Activated CD4-positive, alpha-beta T cell treated with anti-CD3 and anti-CD28 coated beads, Interleukin-2, amount 10 ng/mL, durations not matched to agents 24 days and 14 days (primary cell): ENCODE measurements at regions of chr13 and their contacts with region 1.

Region 1: DNA sequence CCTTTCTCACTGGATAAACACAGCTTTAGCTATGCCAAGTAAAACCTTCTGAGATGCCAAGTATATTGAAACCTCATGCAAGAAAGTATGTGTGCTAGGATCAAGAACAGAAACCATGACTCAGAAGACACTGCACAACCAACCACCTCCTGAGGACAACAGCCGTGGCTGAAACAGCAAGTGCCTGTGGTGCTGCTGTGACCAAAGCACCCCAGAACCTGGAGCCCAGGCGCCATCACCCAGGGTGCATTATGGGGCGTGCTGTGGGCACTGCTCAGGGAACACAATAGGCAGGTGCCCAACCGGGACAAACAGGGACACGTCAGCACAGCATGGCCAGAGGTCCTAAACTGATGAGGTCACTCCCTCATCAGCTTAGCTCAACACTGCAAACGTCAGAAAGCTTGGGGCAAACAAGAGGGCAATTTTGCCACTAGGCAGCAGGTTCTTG is 101.3 kb upstream of the SLC15A1 start:
- DNase-seq: peak; percentile 86
- H3K4me3 Mint-ChIP-seq: peak overlapping the region; percentile 46
- H3K27ac Mint-ChIP-seq: peak overlapping the region; percentile 81
- H3K4me1 Mint-ChIP-seq: peaks cover 19% of the 10 kb centered on the region
- H3K27me3 Mint-ChIP-seq: no peaks in the 10 kb centered on the region

Region 2: DNA sequence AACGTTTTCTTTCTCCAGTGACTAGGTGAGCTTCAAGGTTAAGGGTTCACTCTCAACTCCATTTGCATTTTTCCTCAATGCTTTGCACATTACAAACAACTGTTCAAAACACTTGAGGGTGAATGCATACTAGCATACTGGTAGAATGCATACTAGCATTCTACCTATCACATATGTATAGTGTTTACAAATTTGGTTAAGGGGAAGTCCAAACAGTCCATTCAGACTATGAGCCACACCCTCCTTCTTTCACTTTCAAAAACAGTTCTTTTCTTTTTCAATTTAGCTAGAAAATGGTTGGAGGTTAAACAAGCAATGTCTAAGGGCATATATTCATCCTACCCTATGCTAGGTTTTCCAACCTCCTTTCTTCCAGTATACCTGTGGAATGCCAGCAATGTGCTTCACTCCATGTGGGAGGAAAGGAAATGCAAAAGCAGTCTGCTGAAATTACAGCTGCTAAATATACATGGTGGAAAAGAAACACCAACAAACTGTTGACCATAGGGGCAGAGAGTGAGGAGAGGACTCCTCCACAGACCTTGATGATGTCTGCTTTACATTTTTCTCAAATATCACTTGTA is 21.4 kb after region 1 on chr13:
- intact Hi-C with region 1: loop called (anchors 1 kb)
- DNase-seq: no peak
- H3K4me3 Mint-ChIP-seq: peak overlapping the region; percentile 70
- H3K27ac Mint-ChIP-seq: peak overlapping the region; percentile 93
- H3K4me1 Mint-ChIP-seq: peaks cover 31% of the 10 kb centered on the region
- H3K27me3 Mint-ChIP-seq: no peaks in the 10 kb centered on the region

Region 3: GRCh38 chr13:99027260-99027659 is 173.5 kb after region 1 on chr13:
- intact Hi-C with region 1: loop called (anchors 2 kb)
- DNase-seq: peak; percentile 70
- H3K4me3 Mint-ChIP-seq: peak overlapping the region; percentile 65
- H3K27ac Mint-ChIP-seq: peak overlapping the region; percentile 95
- H3K4me1 Mint-ChIP-seq: peaks cover 63% of the 10 kb centered on the region
- H3K27me3 Mint-ChIP-seq: no peaks in the 10 kb centered on the region